ENCODE measurements at regions of chr10 and their contacts with region 1.

Region 1: GRCh38 chr10:50590935-50591334 is 32.8 kb downstream of the SGMS1 start:
- DNase-seq: no peak
- H3K4me3 ChIP-seq: no peak overlapping the region
- H3K27ac ChIP-seq: no peak overlapping the region
- H3K4me1 ChIP-seq: peaks cover 7% of the 10 kb centered on the region
- H3K27me3 ChIP-seq: no peaks in the 10 kb centered on the region
- CTCF ChIP-seq: no peak
- POLR2A ChIP-seq: no peak

Region 2: DNA sequence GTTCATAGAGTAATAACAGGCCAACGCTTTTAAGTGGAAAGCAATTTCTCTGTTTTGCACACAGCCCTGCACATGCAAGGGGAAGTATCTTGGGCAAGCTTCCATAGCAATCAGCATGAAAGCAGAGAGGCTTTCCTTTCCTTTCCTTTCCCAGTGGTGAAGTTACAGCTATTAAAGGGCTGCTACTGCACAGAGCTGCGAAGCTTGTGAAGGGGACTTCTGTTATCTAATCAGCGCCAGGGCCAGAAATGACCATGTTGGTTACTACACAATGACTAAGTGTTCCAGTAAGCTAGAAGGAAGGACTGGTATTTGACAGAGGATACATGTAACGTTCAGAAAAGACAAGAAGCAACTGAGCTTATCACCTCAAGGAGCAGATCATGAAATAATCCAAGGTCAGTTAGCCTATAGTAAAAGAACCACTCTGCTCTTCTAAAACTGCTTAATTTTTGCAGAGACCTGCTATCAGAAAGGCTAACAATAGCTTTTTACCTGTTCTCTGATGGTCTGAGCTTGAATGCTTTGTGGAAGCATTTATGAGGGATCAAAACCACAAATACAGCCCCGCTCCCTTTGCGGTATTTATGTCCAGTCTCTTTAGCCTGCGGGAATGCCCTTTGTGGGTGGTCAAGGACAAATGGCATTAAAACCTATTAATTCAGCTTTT is 13.1 kb before region 1 on chr10:
- CTCF ChIA-PET with region 1: interaction called, 11 read pairs
- POLR2A ChIA-PET with region 1: no interaction called
- dilution Hi-C with region 1: no loop called
- intact Hi-C with region 1: no loop called
- DNase-seq: peak; percentile 65
- H3K4me3 ChIP-seq: no peak overlapping the region
- H3K27ac ChIP-seq: no peak overlapping the region
- H3K4me1 ChIP-seq: no peaks in the 10 kb centered on the region
- H3K27me3 ChIP-seq: no peaks in the 10 kb centered on the region
- CTCF ChIP-seq: no peak
- POLR2A ChIP-seq: no peak

Region 3: DNA sequence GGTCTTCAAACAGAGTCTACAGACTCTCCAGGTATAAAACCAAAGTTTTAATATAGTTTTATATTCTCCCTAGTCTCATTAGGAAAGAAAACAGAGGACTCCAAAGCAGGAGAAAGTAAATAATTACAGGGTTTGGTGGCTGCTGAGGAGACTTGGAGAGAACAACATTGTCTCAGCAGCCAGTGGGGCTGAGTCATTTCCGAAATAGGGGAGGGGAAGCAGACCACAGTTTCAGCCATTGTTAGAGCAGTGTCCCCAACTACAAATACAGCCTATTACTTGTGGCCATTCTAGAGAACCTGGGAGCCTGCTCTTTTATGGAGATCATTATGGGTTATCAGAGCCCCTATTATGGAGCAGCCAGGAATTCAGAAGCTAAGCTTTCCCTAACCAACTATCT is 338.7 kb after region 1 on chr10:
- CTCF ChIA-PET with region 1: no interaction called
- POLR2A ChIA-PET with region 1: no interaction called
- dilution Hi-C with region 1: no loop called
- intact Hi-C with region 1: no loop called
- DNase-seq: peak; percentile 44
- H3K4me3 ChIP-seq: no peak overlapping the region
- H3K27ac ChIP-seq: no peak overlapping the region
- H3K4me1 ChIP-seq: no peaks in the 10 kb centered on the region
- H3K27me3 ChIP-seq: peaks cover 4 to 14% of the 10 kb centered on the region in 2 experiments
- CTCF ChIP-seq: no peak
- POLR2A ChIP-seq: no peak

Measured in endothelial cell of umbilical vein (primary cell).